ENCODE measurements at regions of chr4 and their contacts with region 1.

Region 1: DNA sequence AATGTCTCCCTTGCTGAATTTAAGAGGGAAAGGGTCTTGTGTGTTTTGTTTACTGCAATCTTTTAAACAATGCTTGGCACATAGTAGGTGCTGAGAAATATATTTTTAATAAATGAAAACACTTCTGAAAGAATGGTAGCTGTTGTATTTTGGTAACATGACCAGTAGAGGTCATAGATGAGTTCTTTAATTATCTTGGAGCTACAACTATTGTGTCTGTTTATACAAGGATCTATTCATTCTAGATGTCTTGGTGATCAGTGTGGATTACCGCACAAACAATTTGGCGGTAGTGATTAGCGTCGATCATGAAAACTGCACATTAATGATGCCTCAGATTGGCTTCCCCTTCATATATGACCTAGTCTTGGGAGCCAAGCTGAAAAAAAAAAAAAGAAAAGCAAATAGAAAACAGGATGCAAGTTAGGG is 21.4 kb upstream of the SCRG1 start:
- DNase-seq: peak; percentile 8
- ATAC-seq: no peak; the same call in 2 of the 3 replicates
- H3K4me3 ChIP-seq: no peak overlapping the region
- H3K27ac ChIP-seq: no peak overlapping the region
- H3K4me1 ChIP-seq: no peaks in the 10 kb centered on the region
- H3K27me3 ChIP-seq: no peaks in the 10 kb centered on the region
- CTCF ChIP-seq: peak; percentile 41
- EP300 ChIP-seq: no peak
- POLR2A ChIP-seq: no peak
- RAD21 ChIP-seq: no peak

Region 2: DNA sequence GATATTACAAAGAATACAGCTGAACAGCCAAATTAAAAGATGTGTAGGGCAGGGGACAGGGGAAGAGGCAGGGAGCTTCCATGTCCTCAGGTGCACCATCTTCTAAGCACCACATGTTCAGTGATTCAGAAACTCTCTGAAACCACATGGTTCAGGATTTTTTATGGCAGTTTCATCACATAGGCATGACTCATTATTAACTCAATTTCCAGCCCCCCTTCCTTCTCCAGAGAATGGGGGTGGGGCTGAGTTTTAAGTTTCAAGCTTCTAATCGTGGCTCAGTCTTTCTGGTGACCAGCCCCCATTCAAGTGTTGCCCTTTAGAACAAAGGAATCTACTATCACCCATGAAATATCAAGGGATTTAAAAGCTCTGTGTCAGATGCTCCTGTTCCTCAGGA is 569.5 kb before region 1 on chr4:
- CTCF ChIA-PET with region 1: no interaction called
- POLR2A ChIA-PET with region 1: no interaction called
- in situ Hi-C with region 1: no loop called
- intact Hi-C with region 1: no loop called
- DNase-seq: no peak
- ATAC-seq: no peak
- H3K4me3 ChIP-seq: no peak overlapping the region
- H3K27ac ChIP-seq: no peak overlapping the region
- H3K4me1 ChIP-seq: no peaks in the 10 kb centered on the region
- H3K27me3 ChIP-seq: no peaks in the 10 kb centered on the region; a peak in 1 of 5 replicates
- CTCF ChIP-seq: no peak
- EP300 ChIP-seq: no peak
- POLR2A ChIP-seq: no peak
- RAD21 ChIP-seq: no peak

Region 3: DNA sequence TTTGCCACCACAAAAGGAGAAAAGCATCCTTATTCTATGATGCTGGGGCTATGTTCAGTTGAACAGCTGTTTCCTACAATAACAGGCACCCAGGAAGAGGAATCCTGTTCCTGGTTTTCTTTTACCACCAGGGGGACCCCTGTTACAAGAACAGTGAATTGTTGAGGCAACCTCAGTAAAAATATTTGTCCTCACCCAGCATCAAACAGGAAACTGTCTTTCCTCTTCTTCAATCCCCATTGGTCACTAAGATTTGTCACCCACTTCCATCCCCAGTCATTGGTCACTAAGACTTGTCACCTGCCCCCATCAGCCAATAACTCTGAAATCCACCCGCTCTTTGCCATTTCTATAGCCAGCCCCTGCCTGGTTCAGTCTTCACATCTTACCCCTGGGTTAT is 395.2 kb before region 1 on chr4:
- CTCF ChIA-PET with region 1: no interaction called
- POLR2A ChIA-PET with region 1: no interaction called
- in situ Hi-C with region 1: loop called (anchors 25 kb)
- intact Hi-C with region 1: loop called (anchors 10 kb)
- DNase-seq: peak; percentile 38
- ATAC-seq: peak; percentile 77
- H3K4me3 ChIP-seq: no peak overlapping the region
- H3K27ac ChIP-seq: no peak overlapping the region
- H3K4me1 ChIP-seq: no peaks in the 10 kb centered on the region
- H3K27me3 ChIP-seq: no peaks in the 10 kb centered on the region
- CTCF ChIP-seq: peak; percentile 53
- EP300 ChIP-seq: no peak
- POLR2A ChIP-seq: no peak
- RAD21 ChIP-seq: no peak

Region 4: DNA sequence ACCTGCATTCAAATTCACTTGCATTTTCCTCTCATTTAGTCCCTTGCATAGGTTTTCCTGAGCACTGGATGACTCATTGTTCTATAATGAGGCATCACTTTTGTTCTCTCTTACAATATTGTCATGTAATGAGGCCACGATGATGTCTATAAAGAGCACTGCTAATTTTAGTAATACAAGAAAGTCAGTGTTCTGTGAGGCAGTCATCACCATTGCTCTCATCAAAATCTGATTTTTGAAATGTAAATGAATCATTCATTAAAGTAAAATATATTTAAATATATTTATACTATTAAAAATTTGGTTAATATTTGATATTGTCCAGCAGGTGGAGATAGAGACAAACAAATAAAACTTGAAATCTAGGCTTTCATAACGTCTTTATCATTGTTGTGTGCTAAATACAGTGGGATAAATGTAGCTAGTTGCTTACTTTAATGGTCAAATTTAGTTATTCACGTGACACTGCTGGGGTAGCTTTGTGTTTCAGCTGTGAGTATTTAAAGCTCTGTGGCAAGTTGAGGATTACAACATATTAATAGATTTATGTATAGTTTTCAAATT is 101.6 kb before region 1 on chr4:
- CTCF ChIA-PET with region 1: interaction called, 62 read pairs
- POLR2A ChIA-PET with region 1: no interaction called
- in situ Hi-C with region 1: loop called (anchors 5 kb)
- intact Hi-C with region 1: loop called (anchors 1 kb)
- DNase-seq: peak; percentile 10
- ATAC-seq: no peak
- H3K4me3 ChIP-seq: no peak overlapping the region
- H3K27ac ChIP-seq: no peak overlapping the region
- H3K4me1 ChIP-seq: no peaks in the 10 kb centered on the region
- H3K27me3 ChIP-seq: no peaks in the 10 kb centered on the region
- CTCF ChIP-seq: peak; percentile 18; the same call in 1 of the 2 replicates
- EP300 ChIP-seq: no peak
- POLR2A ChIP-seq: no peak
- RAD21 ChIP-seq: no peak

Region 5: DNA sequence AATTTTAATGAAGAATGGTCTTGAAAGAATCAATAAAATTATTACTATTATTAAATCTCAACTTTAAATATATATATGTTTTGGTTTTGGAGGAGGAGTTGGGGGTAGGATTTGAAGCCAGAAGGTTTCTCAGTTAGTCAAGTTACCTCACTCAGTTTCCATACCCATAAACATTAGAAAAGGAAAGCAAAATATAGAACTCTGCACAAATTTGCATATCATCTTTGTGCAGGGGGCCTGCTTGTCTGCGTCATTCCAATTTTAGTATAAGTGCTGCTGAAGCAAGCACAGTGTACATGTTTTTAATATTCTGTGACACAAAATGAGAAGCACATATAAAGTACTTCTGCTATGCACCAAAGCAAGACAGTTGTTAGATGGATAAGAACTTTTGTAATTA is 26.1 kb after region 1 on chr4:
- CTCF ChIA-PET with region 1: no interaction called
- POLR2A ChIA-PET with region 1: no interaction called
- in situ Hi-C with region 1: no loop called
- intact Hi-C with region 1: no loop called
- DNase-seq: no peak
- ATAC-seq: no peak
- H3K4me3 ChIP-seq: no peak overlapping the region
- H3K27ac ChIP-seq: no peak overlapping the region
- H3K4me1 ChIP-seq: no peaks in the 10 kb centered on the region
- H3K27me3 ChIP-seq: no peaks in the 10 kb centered on the region
- CTCF ChIP-seq: no peak
- EP300 ChIP-seq: no peak
- POLR2A ChIP-seq: no peak
- RAD21 ChIP-seq: no peak

Region 6: DNA sequence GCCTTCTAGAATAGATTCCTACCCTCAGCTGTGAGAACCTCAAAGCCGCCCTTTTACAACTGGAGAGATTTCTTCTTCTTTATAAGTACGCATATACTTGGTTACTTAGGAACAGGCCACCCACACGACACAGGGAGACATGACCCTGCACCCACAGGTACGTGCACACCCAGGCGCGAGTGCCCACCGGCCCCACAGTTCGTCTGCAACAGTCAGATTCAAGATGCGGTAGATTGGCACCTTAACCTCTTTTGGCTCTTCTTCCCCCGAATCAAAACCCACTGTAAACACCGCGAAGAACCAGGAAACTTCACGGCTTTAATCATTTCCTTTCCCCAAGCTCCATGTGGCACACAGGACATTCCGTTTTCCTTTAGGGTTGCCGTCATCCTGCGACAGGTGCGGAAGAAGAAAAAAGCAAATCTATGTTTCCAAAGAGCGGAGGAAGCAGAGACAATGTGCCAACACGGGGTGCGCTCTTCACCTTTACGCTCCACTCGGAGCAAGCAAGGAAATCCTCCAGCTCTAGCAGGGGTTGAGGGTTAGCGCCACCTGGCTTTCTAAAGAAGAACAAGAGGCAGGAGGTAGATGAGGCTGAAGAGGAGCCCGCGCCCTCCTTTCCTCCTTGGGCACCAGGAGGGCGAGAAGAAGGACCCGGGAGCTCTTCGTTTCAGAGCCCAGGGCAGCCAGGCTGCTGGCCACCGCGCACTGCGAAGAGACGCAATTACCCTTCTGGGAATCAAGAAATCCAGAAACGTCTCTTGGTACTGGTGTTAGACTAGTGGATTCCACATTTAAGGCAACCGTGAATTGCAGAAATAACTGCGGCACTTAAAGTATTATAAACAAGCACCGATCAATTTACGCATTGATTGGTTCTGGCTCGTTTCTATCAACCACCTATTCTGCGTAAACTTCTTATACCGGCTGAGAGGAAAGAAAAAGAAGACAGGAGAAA is 74.0 kb after region 1 on chr4:
- CTCF ChIA-PET with region 1: interaction called, 21 read pairs
- POLR2A ChIA-PET with region 1: no interaction called
- in situ Hi-C with region 1: loop called (anchors 5 kb)
- intact Hi-C with region 1: no loop called
- DNase-seq: peak; percentile 66
- ATAC-seq: peak; percentile 93
- H3K4me3 ChIP-seq: peak overlapping the region in 1 of 3 experiments; percentile 44; a peak in 2 of 6 replicates
- H3K27ac ChIP-seq: no peak overlapping the region
- H3K4me1 ChIP-seq: peaks cover 28% of the 10 kb centered on the region
- H3K27me3 ChIP-seq: peaks cover 0 to 4% of the 10 kb centered on the region in 2 experiments; a peak in 2 of 5 replicates
- CTCF ChIP-seq: peak; percentile 80
- EP300 ChIP-seq: no peak
- POLR2A ChIP-seq: no peak
- RAD21 ChIP-seq: peak; percentile 40

Region 7: DNA sequence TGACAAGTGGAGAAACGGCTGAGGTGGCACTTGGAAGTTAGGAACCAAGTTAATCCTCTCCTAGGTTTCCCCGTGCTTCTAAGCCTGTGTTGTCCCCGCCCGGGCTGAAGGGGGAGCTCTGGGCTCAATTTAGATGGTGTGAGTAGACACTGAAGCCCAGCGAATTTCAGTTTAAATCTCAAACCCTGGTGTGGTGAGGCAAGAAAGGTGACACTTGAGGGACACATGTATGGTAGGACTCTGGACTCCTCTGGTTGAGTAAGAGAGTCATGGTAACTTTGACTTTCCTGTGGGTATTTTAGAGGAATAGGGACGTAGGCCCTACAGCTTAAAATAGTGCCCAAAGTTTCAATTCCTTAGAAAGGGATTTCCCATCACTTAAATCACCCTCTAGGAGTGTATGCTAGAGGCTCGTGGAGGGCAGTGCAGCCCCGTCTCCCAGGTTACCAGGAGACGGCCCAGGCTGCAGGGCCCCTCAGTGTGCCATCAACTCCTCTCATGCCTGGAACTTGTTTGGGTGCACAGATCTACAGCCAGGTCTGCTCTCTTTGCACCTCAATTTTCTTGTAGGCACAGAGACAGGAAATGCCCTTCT is 85.7 kb after region 1 on chr4:
- CTCF ChIA-PET with region 1: no interaction called
- POLR2A ChIA-PET with region 1: no interaction called
- in situ Hi-C with region 1: no loop called
- intact Hi-C with region 1: no loop called
- DNase-seq: peak; percentile 21
- ATAC-seq: peak; percentile 94
- H3K4me3 ChIP-seq: no peak overlapping the region
- H3K27ac ChIP-seq: no peak overlapping the region
- H3K4me1 ChIP-seq: no peaks in the 10 kb centered on the region
- H3K27me3 ChIP-seq: peaks cover 4 to 42% of the 10 kb centered on the region in 2 experiments; a peak in 4 of 5 replicates
- CTCF ChIP-seq: peak; percentile 81
- EP300 ChIP-seq: no peak
- POLR2A ChIP-seq: no peak
- RAD21 ChIP-seq: peak; percentile 39

Region 8: GRCh38 chr4:173529477-173530325 is 109.4 kb after region 1 on chr4 and contains the start of gene HAND2:
- CTCF ChIA-PET with region 1: no interaction called
- POLR2A ChIA-PET with region 1: no interaction called
- in situ Hi-C with region 1: no loop called
- intact Hi-C with region 1: no loop called
- DNase-seq: no peak
- ATAC-seq: no peak
- H3K4me3 ChIP-seq: no peak within 1 kb of the TSS
- H3K27ac ChIP-seq: no peak within 1 kb of the TSS
- H3K4me1 ChIP-seq: no peaks in the 10 kb centered on the region
- H3K27me3 ChIP-seq: peaks cover 9 to 69% of the 10 kb centered on the region in 2 experiments
- CTCF ChIP-seq: no peak
- EP300 ChIP-seq: no peak
- POLR2A ChIP-seq: no peak
- RAD21 ChIP-seq: no peak
- total RNA-seq, gene HAND2: not detected in 2 replicates

Measured in HepG2 (cell line).